ENCODE measurements at regions of chr10 and their contacts with region 1.

Region 1: GRCh38 chr10:99374526-99374925 is 45.4 kb downstream of the CNNM1 start:
- DNase-seq: no peak
- H3K4me3 Mint-ChIP-seq: no peak overlapping the region
- H3K27ac Mint-ChIP-seq: no peak overlapping the region
- H3K4me1 Mint-ChIP-seq: peaks cover 5% of the 10 kb centered on the region
- H3K27me3 Mint-ChIP-seq: peaks cover 28% of the 10 kb centered on the region

Region 2: GRCh38 chr10:99395750-99396445 is 21.4 kb after region 1 on chr10:
- CTCF ChIA-PET with region 1: interaction called, 10 read pairs
- POLR2A ChIA-PET with region 1: no interaction called
- intact Hi-C with region 1: no loop called
- DNase-seq: no peak
- H3K4me3 Mint-ChIP-seq: no peak overlapping the region
- H3K27ac Mint-ChIP-seq: no peak overlapping the region
- H3K4me1 Mint-ChIP-seq: peaks cover 2% of the 10 kb centered on the region
- H3K27me3 Mint-ChIP-seq: no peaks in the 10 kb centered on the region

Measured in activated CD4-positive, alpha-beta memory T cell treated with anti-CD3 and anti-CD28 coated beads for 36 hours (primary cell).